ENCODE measurements at regions of chr2 and their contacts with region 1.

Region 1: GRCh38 chr2:230913406-230914143 is 11.5 kb downstream of the GPR55 start:
- DNase-seq: no peak
- H3K4me3 ChIP-seq: no peak overlapping the region
- H3K27ac ChIP-seq: no peak overlapping the region
- H3K27me3 ChIP-seq: peaks cover 18% of the 10 kb centered on the region
- CTCF ChIP-seq: peak; percentile 33

Region 2: DNA sequence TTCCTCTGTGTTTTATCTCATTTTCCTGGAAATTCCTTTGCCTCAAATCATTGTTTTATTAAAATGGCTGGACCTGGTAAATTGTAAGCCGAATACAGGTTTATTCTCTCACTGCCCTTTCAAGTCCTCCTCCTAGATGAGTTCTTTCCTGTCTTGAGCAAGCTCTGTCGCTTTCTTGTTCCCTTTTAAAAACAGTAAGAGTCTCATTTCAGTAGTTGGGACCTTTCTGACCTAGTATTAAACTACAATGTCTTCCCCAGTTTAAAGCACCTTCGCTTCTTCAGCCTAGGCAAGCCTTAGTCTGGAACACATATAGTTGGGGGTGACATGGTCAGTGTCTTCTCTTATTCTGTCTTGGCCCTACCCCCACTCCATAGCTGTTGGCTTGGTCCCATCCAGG is 627.5 kb before region 1 on chr2:
- CTCF ChIA-PET with region 1: no interaction called
- POLR2A ChIA-PET with region 1: no interaction called
- DNase-seq: no peak
- H3K4me3 ChIP-seq: no peak overlapping the region
- H3K27ac ChIP-seq: no peak overlapping the region
- H3K27me3 ChIP-seq: no peaks in the 10 kb centered on the region
- CTCF ChIP-seq: no peak

Region 3: DNA sequence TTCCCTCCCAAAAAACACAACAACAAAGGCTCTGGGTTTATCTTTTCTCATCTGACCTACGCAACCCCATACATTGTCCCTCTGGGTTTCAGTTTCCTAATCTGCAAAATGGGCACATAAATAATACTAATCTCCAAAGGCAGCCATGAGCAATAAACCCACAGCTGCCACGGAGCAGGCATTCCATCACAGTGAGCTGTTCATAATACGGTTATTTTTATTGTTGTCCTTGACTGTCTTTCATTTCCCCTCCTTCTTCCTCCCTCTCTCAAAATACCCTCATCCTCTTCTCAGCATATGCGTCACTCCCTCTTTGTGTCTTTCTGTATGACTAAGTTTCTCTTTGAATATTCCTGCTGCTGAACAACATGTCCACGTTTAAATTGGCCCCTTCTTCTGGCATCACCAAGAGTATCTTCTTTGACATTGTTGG is 330.7 kb before region 1 on chr2:
- CTCF ChIA-PET with region 1: no interaction called
- POLR2A ChIA-PET with region 1: no interaction called
- DNase-seq: no peak
- H3K4me3 ChIP-seq: no peak overlapping the region
- H3K27ac ChIP-seq: no peak overlapping the region
- H3K27me3 ChIP-seq: peaks cover 4% of the 10 kb centered on the region
- CTCF ChIP-seq: no peak

Region 4: GRCh38 chr2:230902180-230902899 is 11.2 kb before region 1 on chr2:
- CTCF ChIA-PET with region 1: interaction called, 15 read pairs
- POLR2A ChIA-PET with region 1: no interaction called
- DNase-seq: peak; percentile 42
- H3K4me3 ChIP-seq: no peak overlapping the region
- H3K27ac ChIP-seq: no peak overlapping the region
- H3K27me3 ChIP-seq: peaks cover 30% of the 10 kb centered on the region
- CTCF ChIP-seq: peak; percentile 95

Measured in AG04450 (cell line).